T-cell (primary cell): ENCODE measurements at regions of chr15 and their contacts with region 1.

Region 1: GRCh38 chr15:60568301-60568742 is 89.4 kb upstream of the ICE2 start:
- DNase-seq: no peak
- ATAC-seq: no peak
- H3K4me3 ChIP-seq: no peak overlapping the region
- H3K4me3 Mint-ChIP-seq: peak overlapping the region; percentile 56 to 74 (median 66)
- H3K27ac ChIP-seq: peak overlapping the region; percentile 80
- H3K27ac Mint-ChIP-seq: peak overlapping the region; percentile 92 to 93
- H3K4me1 ChIP-seq: peaks cover 57 to 70% of the 10 kb centered on the region in 2 experiments
- H3K4me1 Mint-ChIP-seq: peaks cover 95 to 97% (median 97%) of the 10 kb centered on the region in 3 donors
- H3K27me3 ChIP-seq: no peaks in the 10 kb centered on the region
- H3K27me3 Mint-ChIP-seq: no peaks in the 10 kb centered on the region

Region 2: DNA sequence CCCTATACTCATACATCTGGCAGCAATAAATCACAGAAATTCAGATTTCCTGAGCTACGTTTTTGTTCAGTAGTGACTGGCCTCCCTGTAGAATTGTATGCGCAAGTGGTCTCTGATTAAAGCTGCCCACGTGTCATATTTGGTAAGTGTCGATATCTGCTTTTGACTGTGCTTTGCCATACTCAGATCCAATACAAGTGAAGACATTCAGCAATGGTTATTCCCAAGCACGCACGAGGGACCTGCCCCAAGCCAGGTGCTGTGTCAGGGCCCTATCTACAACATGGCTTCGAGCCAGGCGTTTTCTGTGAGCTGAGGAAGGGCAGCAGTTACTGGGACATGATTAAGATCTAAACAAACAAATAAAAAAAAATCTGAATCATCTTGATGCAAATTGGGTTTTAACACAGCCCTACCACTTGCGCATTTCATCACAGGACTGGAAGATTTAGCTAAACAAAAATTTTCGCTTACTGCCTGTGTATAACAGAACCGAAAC is 42.1 kb before region 1 on chr15:
- CTCF ChIA-PET with region 1: interaction called, 4 to 12 read pairs
- POLR2A ChIA-PET with region 1: interaction called in 1 of 2 experiments, 10 read pairs
- DNase-seq: peak in 19 of 35 experiments; percentile 27 to 66 (median 42)
- ATAC-seq: peak in 2 of 4 experiments; percentile 25 to 30
- H3K4me3 ChIP-seq: no peak overlapping the region
- H3K4me3 Mint-ChIP-seq: no peak overlapping the region
- H3K27ac ChIP-seq: peak overlapping the region; percentile 82
- H3K27ac Mint-ChIP-seq: peak overlapping the region; percentile 94 to 96
- H3K4me1 ChIP-seq: peaks cover 3 to 27% of the 10 kb centered on the region in 2 experiments
- H3K4me1 Mint-ChIP-seq: peaks cover 65 to 90% (median 84%) of the 10 kb centered on the region in 3 donors
- H3K27me3 ChIP-seq: no peaks in the 10 kb centered on the region
- H3K27me3 Mint-ChIP-seq: no peaks in the 10 kb centered on the region

Region 3: GRCh38 chr15:60580650-60581376 is 12.5 kb after region 1 on chr15:
- CTCF ChIA-PET with region 1: interaction called, 3 to 38 read pairs
- POLR2A ChIA-PET with region 1: interaction called, 10 to 56 read pairs
- DNase-seq: peak in 28 of 35 experiments; percentile 32 to 88 (median 58)
- ATAC-seq: peak; percentile 83 to 92 (median 88)
- H3K4me3 ChIP-seq: peak overlapping the region; percentile 12 to 25
- H3K4me3 Mint-ChIP-seq: peak overlapping the region; percentile 68 to 70 (median 70)
- H3K27ac ChIP-seq: peak overlapping the region; percentile 87
- H3K27ac Mint-ChIP-seq: peak overlapping the region; percentile 96 to 97
- H3K4me1 ChIP-seq: peaks cover 50 to 66% of the 10 kb centered on the region in 2 experiments
- H3K4me1 Mint-ChIP-seq: peaks cover 84 to 95% (median 93%) of the 10 kb centered on the region in 3 donors
- H3K27me3 ChIP-seq: no peaks in the 10 kb centered on the region
- H3K27me3 Mint-ChIP-seq: no peaks in the 10 kb centered on the region